Naive thymus-derived CD4-positive, alpha-beta T cell (primary cell): ENCODE measurements at regions of chr3 and their contacts with region 1.

Region 1: GRCh38 chr3:128447561-128448013 is 19.1 kb downstream of the DNAJB8 start:
- DNase-seq: peak in 5 of 9 donors; percentile 22 to 63 (median 27)
- ATAC-seq: peak; percentile 29
- H3K4me3 ChIP-seq: no peak overlapping the region
- H3K4me3 Mint-ChIP-seq: peak overlapping the region in 6 of 10 donors; percentile 4 to 82 (median 34)
- H3K27ac ChIP-seq: peak overlapping the region; percentile 4
- H3K27ac Mint-ChIP-seq: peak overlapping the region in 7 of 9 donors; percentile 39 to 94 (median 81)
- H3K4me1 ChIP-seq: peaks cover 0 to 17% of the 10 kb centered on the region in 2 donors
- H3K4me1 Mint-ChIP-seq: peaks cover 17 to 45% (median 36%) of the 10 kb centered on the region in 7 donors
- H3K27me3 ChIP-seq: no peaks in the 10 kb centered on the region
- H3K27me3 Mint-ChIP-seq: peaks cover 0 to 8% (median 3%) of the 10 kb centered on the region in 5 donors

Region 2: DNA sequence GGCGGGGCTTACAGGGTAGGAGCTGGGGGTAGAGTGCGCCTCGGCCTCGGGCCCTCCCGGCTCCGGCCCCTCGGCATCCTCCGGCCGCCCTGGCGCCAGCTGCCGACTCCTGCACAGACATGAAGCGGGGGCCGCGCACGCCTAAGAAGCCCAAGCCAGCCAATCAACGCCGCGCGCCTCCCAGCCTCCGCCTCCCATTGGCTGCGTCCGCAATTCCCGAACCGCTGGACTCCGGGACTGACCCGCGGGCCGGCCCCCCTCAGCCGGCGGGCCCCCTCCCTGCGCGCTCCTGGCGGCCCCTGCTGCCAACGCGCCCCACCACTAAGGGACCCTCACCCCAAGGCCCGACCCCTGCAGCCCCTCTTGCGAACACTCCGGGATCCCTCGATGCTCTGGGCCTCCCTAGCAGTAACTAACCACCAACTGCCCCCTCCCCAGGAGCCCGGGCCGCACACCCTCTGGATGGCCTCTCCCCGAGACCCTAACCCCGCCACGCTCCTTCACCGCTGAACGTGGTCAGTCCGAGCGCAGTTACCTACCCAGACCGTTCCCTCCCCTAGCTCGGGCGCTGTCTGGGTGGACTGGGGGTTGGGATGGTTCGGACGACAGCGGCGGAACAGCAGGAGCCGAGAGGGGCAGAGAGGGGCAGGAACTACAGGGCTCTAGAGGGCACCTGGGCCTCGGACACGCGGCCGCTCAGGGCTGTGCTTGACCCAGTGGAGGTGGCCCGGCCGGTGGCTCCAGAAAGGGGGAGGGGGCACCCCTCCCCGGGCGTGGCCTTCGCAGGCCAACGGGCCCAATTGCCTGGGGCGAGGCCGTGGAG is 40.4 kb after region 1 on chr3:
- CTCF ChIA-PET with region 1: no interaction called
- POLR2A ChIA-PET with region 1: interaction called, 4 read pairs
- intact Hi-C with region 1: loop called (anchors 5 kb)
- DNase-seq: peak in 2 of 9 donors; percentile 28 to 36
- ATAC-seq: peak; percentile 30
- H3K4me3 ChIP-seq: peak overlapping the region; percentile 59
- H3K4me3 Mint-ChIP-seq: peak overlapping the region in 9 of 10 donors; percentile 25 to 97 (median 89)
- H3K27ac ChIP-seq: no peak overlapping the region
- H3K27ac Mint-ChIP-seq: no peak overlapping the region
- H3K4me1 ChIP-seq: peaks cover 11 to 61% of the 10 kb centered on the region in 2 donors
- H3K4me1 Mint-ChIP-seq: peaks cover 21 to 52% (median 31%) of the 10 kb centered on the region in 7 donors
- H3K27me3 ChIP-seq: peaks cover 14 to 52% of the 10 kb centered on the region in 2 donors
- H3K27me3 Mint-ChIP-seq: peaks cover 58 to 80% (median 62%) of the 10 kb centered on the region in 5 donors

Region 3: DNA sequence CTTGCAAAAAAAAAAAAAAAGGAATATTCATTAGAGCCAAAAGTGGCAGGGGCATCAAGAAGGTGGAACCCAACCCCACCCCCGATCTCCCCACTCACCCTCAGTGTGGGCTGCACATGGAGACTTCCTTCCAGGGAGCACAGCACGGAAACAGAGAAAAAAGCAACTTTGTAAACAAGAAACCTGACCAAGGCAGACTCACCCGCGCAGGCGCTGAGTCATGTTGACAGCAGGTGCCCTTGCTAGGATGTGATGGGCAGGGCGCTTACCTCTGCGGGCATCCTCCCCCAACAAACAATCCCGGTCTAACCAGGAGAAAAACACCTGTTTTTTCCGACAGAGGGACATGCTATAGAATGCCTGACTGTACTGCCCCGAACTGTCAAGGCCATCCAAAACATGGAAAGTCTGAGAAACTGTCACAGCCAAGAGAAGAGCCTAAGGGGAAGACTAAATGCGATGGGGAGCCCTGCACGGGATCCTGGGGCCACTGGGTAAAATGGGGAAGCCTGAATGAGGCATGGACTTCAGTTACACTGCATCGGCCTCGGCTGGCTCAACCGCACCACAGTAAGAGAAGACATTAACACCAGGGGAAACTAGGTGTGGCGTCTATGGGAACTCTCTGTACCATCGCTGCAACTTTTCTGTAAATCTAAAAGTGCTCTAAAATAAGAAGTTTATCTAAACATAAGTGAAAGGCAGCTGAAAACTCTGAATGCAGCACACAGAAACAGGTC is 112.1 kb after region 1 on chr3:
- CTCF ChIA-PET with region 1: no interaction called
- POLR2A ChIA-PET with region 1: no interaction called
- intact Hi-C with region 1: no loop called
- DNase-seq: no peak
- ATAC-seq: no peak
- H3K4me3 ChIP-seq: no peak overlapping the region
- H3K4me3 Mint-ChIP-seq: peak overlapping the region in 2 of 10 donors; percentile 5 to 6
- H3K27ac ChIP-seq: no peak overlapping the region
- H3K27ac Mint-ChIP-seq: peak overlapping the region in 1 of 9 donors; percentile 0
- H3K4me1 ChIP-seq: no peaks in the 10 kb centered on the region
- H3K4me1 Mint-ChIP-seq: peaks cover 3 to 14% (median 10%) of the 10 kb centered on the region in 7 donors
- H3K27me3 ChIP-seq: peaks cover 0 to 2% of the 10 kb centered on the region in 2 donors
- H3K27me3 Mint-ChIP-seq: peaks cover 31 to 43% (median 33%) of the 10 kb centered on the region in 5 donors